WTC11 (cell line): ENCODE measurements at regions of chr19 and their contacts with region 1.

Region 1: GRCh38 chr19:5827891-5828660 is 11.4 kb downstream of the FUT6 start:
- DNase-seq: peak; percentile 93
- ATAC-seq: peak; percentile 75
- H3K4me3 Mint-ChIP-seq: peak overlapping the region; percentile 91
- H3K27ac Mint-ChIP-seq: peak overlapping the region; percentile 97
- H3K4me1 Mint-ChIP-seq: peaks cover 6% of the 10 kb centered on the region
- H3K27me3 Mint-ChIP-seq: no peaks in the 10 kb centered on the region; the same call in none of the 2 replicates
- CTCF ChIP-seq: no peak

Region 2: DNA sequence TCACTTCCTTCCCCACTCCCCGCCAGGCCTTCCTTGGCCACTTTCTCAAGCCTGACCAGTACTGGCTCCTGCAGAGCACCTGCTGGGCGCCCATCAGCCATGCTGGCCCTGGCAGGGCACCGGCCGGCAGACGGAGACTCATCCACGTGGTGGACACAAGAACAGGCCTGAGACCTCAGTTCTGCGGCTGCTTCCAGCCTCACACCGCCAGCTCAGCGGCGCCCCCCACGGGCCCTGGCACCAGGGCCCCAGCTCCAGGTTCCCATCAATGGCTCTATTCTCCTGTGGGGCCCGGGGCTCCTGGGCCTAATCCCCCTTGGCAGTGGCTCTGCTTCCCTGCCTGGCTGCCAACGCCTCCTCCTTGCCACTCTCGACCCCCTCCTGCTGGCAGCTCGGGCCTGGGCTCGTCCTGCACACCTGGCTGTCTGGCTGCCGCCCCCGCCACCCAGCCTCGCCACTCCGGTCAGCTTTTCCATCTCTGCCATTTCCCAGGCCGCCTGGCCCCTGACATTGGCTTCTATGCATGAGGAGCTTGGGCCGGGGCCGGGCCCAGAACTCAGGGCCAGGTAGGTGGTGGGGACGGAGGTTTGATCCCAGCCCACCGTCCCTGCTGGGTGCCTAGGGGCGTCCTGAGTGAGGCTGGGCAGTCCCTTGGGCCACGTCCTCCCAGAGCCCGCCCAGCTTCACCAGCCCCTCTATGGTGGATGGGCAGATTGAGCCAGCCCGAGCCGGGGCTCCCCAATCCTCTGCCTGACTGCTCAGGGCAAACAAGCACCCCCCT is 69.3 kb after region 1 on chr19:
- CTCF ChIA-PET with region 1: interaction called, 20 read pairs
- POLR2A ChIA-PET with region 1: interaction called, 18 read pairs
- DNase-seq: peak; percentile 42
- ATAC-seq: peak; percentile 36
- H3K4me3 Mint-ChIP-seq: no peak overlapping the region
- H3K27ac Mint-ChIP-seq: no peak overlapping the region
- H3K4me1 Mint-ChIP-seq: 0 out of 2 replicates have a peak, but pooled peaks cover under 1% of the 10 kb centered on the region
- H3K27me3 Mint-ChIP-seq: no peaks in the 10 kb centered on the region
- CTCF ChIP-seq: 0 out of 2 replicates have a peak, but pooled peaks have one; percentile 17

Region 3: GRCh38 chr19:5904352-5905113 is 76.5 kb after region 1 on chr19 and contains the start of gene VMAC:
- CTCF ChIA-PET with region 1: interaction called, 20 read pairs
- POLR2A ChIA-PET with region 1: interaction called, 18 read pairs
- DNase-seq: peak; percentile 100
- ATAC-seq: peak; percentile 89
- H3K4me3 Mint-ChIP-seq: peak within 1 kb of the TSS; percentile 93
- H3K27ac Mint-ChIP-seq: peak within 1 kb of the TSS; percentile 99
- H3K4me1 Mint-ChIP-seq: peaks cover 4% of the 10 kb centered on the region
- H3K27me3 Mint-ChIP-seq: no peaks in the 10 kb centered on the region
- CTCF ChIP-seq: no peak
- total RNA-seq, gene VMAC: 2.5 to 3.3 TPM (median 3.3 TPM) in 3 replicates

Region 4: GRCh38 chr19:5914921-5915781 is 87.1 kb after region 1 on chr19:
- CTCF ChIA-PET with region 1: no interaction called
- POLR2A ChIA-PET with region 1: no interaction called
- DNase-seq: no peak
- ATAC-seq: peak; percentile 17; the same call in 1 of the 2 replicates
- H3K4me3 Mint-ChIP-seq: no peak overlapping the region
- H3K27ac Mint-ChIP-seq: no peak overlapping the region
- H3K4me1 Mint-ChIP-seq: no peaks in the 10 kb centered on the region
- H3K27me3 Mint-ChIP-seq: no peaks in the 10 kb centered on the region
- CTCF ChIP-seq: no peak